ENCODE measurements at regions of chr11 and their contacts with region 1.

Region 1: GRCh38 chr11:73307323-73308002 is 613 bp upstream of the ARHGEF17 start:
- DNase-seq: peak; percentile 96 to 99
- H3K4me3 ChIP-seq: peak overlapping the region; percentile 95
- H3K27ac ChIP-seq: peak overlapping the region; percentile 79
- H3K4me1 ChIP-seq: peaks cover 22% of the 10 kb centered on the region
- H3K27me3 ChIP-seq: no peaks in the 10 kb centered on the region
- CTCF ChIP-seq: peak; percentile 93

Region 2: GRCh38 chr11:73177778-73178577 is 129.5 kb before region 1 on chr11:
- CTCF ChIA-PET with region 1: no interaction called
- POLR2A ChIA-PET with region 1: interaction called, 13 read pairs
- intact Hi-C with region 1: no loop called
- DNase-seq: peak; percentile 69 to 84
- H3K4me3 ChIP-seq: no peak overlapping the region
- H3K27ac ChIP-seq: no peak overlapping the region
- H3K4me1 ChIP-seq: peaks cover 22% of the 10 kb centered on the region
- H3K27me3 ChIP-seq: no peaks in the 10 kb centered on the region
- CTCF ChIP-seq: peak; percentile 93

Region 3: DNA sequence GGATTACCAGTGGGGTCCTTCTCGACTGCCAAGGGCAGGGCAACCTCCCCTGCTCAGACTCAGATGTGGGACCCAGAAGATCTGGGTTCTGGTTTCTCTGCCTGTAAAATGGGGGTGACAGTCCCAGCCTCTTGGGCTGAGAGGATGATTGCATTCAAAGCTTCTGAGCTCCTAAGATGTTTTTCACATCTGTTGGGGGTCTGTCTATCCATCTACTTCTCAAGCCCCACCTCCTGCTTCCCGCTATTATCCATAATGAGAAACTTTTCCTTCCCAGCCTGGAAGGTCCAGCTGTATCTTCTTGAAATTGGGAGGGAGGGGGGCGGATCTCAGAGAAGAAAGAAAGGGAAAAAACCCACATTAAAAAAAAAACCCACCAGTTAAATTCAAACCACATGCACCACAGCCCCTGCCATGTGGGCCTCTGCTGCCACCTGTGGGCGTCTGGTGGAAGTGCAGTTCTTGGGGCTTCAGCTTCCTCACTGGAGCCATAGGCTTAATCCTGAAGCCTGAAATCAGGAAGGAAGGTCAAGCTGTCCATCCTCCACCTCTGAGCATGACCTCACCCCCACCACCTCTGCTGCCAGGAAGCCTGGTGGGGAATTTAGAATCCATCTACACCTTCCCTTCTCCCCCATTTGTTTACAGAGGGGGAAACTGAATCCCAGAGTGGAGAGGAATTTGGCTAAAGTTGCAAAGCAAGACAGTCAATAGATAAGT is 27.9 kb after region 1 on chr11:
- CTCF ChIA-PET with region 1: interaction called, 56 read pairs
- POLR2A ChIA-PET with region 1: interaction called, 11 read pairs
- intact Hi-C with region 1: loop called (anchors 1 kb)
- DNase-seq: peak; percentile 67 to 90
- H3K4me3 ChIP-seq: no peak overlapping the region
- H3K27ac ChIP-seq: no peak overlapping the region
- H3K4me1 ChIP-seq: peaks cover 20% of the 10 kb centered on the region
- H3K27me3 ChIP-seq: no peaks in the 10 kb centered on the region
- CTCF ChIP-seq: peak; percentile 99

Region 4: GRCh38 chr11:73376160-73376802 is 68.8 kb after region 1 on chr11 and contains the start of gene RELT:
- CTCF ChIA-PET with region 1: interaction called, 3 read pairs
- POLR2A ChIA-PET with region 1: no interaction called
- intact Hi-C with region 1: loop called (anchors 1 kb)
- DNase-seq: peak; percentile 78 to 97
- H3K4me3 ChIP-seq: peak within 1 kb of the TSS; percentile 81
- H3K27ac ChIP-seq: no peak within 1 kb of the TSS
- H3K4me1 ChIP-seq: peaks cover 13% of the 10 kb centered on the region; the same call in 1 of the 2 replicates
- H3K27me3 ChIP-seq: no peaks in the 10 kb centered on the region
- CTCF ChIP-seq: peak; percentile 92
- total RNA-seq, gene RELT: 7.8 and 10.7 TPM in 2 replicates

Region 5: DNA sequence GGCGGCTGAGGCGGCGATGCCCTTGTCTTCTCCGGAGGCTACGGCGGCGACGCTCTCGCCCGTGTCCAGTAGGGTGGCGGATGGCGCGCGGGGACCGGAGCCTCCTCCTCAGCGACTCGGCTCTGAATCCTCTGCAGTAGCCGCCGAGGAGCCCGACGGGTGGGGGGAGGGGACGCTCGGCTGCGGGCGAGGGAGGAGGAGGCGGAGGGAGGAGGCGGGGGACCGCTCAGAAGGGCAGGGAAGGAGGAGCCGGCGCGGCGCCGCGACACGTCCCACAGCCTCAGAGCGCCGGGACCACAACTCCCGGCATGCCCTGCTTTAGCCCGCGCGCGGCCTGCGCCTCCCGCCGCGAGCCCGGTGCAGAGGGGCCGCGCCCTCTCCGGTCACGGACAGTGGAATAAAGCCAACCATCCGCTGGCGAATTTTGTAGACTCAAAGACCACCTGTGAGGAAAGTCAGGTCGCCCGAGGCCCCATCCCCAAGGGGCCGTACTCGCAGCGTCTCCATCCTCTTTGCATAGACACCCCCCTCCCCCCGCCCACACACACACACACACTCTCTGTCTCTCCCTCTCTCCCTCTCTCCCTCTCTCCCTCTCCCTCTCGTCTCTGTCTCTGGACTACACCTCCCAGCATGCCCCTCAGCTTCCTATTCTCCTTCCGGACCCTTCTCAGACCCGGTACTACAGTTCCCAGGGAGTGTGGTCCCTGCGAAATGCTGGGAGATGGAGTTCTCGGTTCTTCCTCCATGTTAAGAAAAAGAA is 290.7 kb after region 1 on chr11 and contains the start of gene FAM168A:
- CTCF ChIA-PET with region 1: no interaction called
- POLR2A ChIA-PET with region 1: no interaction called
- intact Hi-C with region 1: loop called (anchors 5 kb)
- DNase-seq: peak; percentile 88 to 94
- H3K4me3 ChIP-seq: peak within 1 kb of the TSS; percentile 86
- H3K27ac ChIP-seq: peak within 1 kb of the TSS; percentile 22; the same call in 1 of the 2 replicates
- H3K4me1 ChIP-seq: peaks cover 16% of the 10 kb centered on the region
- H3K27me3 ChIP-seq: no peaks in the 10 kb centered on the region
- CTCF ChIP-seq: no peak
- total RNA-seq, gene FAM168A: 38.6 and 51.2 TPM in 2 replicates

Region 6: GRCh38 chr11:74492974-74493790 is 1185.7 kb after region 1 on chr11 and contains the start of gene LIPT2:
- CTCF ChIA-PET with region 1: no interaction called
- POLR2A ChIA-PET with region 1: interaction called, 17 read pairs
- intact Hi-C with region 1: no loop called
- DNase-seq: peak; percentile 96 to 99
- H3K4me3 ChIP-seq: peak within 1 kb of the TSS; percentile 70
- H3K27ac ChIP-seq: peak within 1 kb of the TSS; percentile 82
- H3K4me1 ChIP-seq: peaks cover 23% of the 10 kb centered on the region
- H3K27me3 ChIP-seq: no peaks in the 10 kb centered on the region
- CTCF ChIP-seq: no peak
- total RNA-seq, gene LIPT2: 5.8 and 6.8 TPM in 2 replicates

Measured in PC-9 (cell line).